A673 (cell line): ENCODE measurements at regions of chr2 and their contacts with region 1.

Region 1: GRCh38 chr2:233072838-233073237 is 12.7 kb downstream of the INPP5D start:
- DNase-seq: no peak
- H3K4me3 ChIP-seq: no peak overlapping the region
- H3K27ac ChIP-seq: no peak overlapping the region
- H3K4me1 ChIP-seq: no peaks in the 10 kb centered on the region
- H3K27me3 ChIP-seq: no peaks in the 10 kb centered on the region
- CTCF ChIP-seq: no peak

Region 2: GRCh38 chr2:232761301-232761907 is 311.4 kb before region 1 on chr2:
- CTCF ChIA-PET with region 1: no interaction called
- POLR2A ChIA-PET with region 1: interaction called, 13 read pairs
- intact Hi-C with region 1: no loop called
- DNase-seq: peak; percentile 43
- H3K4me3 ChIP-seq: no peak overlapping the region
- H3K27ac ChIP-seq: no peak overlapping the region
- H3K4me1 ChIP-seq: no peaks in the 10 kb centered on the region
- H3K27me3 ChIP-seq: no peaks in the 10 kb centered on the region
- CTCF ChIP-seq: peak; percentile 63

Region 3: GRCh38 chr2:233480490-233481202 is 407.8 kb after region 1 on chr2:
- CTCF ChIA-PET with region 1: no interaction called
- POLR2A ChIA-PET with region 1: no interaction called
- intact Hi-C with region 1: no loop called
- DNase-seq: no peak
- H3K4me3 ChIP-seq: no peak overlapping the region
- H3K27ac ChIP-seq: no peak overlapping the region
- H3K4me1 ChIP-seq: no peaks in the 10 kb centered on the region
- H3K27me3 ChIP-seq: no peaks in the 10 kb centered on the region
- CTCF ChIP-seq: no peak